ENCODE measurements at regions of chr16 and their contacts with region 1.

Region 1: DNA sequence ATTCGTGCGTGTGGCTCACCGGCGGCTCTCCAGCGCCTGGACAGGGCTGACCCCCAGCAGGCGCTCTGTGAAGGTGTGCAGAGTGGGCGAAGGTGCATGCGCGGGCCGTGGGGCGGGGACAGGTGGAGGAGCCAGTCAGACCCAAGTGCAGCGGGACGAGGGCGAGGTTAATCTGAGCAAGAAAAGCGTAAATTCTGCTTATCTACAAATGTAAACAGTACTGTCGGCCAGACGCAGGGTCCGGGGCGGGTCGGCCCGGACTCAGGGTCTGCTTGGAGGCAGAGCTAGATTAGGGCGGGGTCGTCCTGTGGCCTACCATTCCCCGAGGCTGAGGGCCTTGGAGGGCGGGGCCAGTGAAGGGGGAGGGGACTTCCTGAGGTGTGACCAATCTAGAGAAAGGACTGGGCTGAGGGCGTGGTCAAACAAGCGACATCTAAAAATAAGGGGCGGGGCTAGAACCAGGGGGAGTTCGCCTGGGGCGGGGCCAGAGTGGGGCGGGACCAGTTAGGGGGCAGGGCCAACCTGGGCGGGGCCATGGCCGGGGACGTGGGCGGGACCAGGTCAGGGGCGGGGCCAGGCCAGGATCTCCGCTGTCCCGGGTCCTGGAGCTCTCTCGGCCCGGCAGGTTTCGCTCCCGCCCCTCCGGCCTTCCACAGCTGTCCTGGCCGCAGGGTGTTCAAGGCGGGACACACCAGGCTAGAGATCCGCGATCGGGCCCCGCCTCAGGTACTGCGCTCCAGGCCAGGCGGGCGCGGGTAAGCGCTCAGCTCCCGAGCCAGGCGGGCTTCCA is at the start of gene SEC14L5:
- DNase-seq: peak; percentile 100
- ATAC-seq: peak; percentile 93
- H3K4me3 ChIP-seq: peak within 1 kb of the TSS; percentile 62 to 77 (median 62)
- H3K27ac ChIP-seq: peak within 1 kb of the TSS; percentile 77
- H3K4me1 ChIP-seq: peaks cover 23% of the 10 kb centered on the region
- H3K27me3 ChIP-seq: peaks cover 0 to 18% of the 10 kb centered on the region in 2 experiments; a peak in 3 of 5 replicates
- CTCF ChIP-seq: peak; percentile 61
- EP300 ChIP-seq: no peak; a peak in 1 of 4 replicates
- POLR2A ChIP-seq: peak; percentile 74 to 85
- RAD21 ChIP-seq: peak; percentile 41; the same call in 1 of the 2 replicates
- total RNA-seq, gene SEC14L5: 0.36 and 0.42 TPM in 2 replicates

Region 2: DNA sequence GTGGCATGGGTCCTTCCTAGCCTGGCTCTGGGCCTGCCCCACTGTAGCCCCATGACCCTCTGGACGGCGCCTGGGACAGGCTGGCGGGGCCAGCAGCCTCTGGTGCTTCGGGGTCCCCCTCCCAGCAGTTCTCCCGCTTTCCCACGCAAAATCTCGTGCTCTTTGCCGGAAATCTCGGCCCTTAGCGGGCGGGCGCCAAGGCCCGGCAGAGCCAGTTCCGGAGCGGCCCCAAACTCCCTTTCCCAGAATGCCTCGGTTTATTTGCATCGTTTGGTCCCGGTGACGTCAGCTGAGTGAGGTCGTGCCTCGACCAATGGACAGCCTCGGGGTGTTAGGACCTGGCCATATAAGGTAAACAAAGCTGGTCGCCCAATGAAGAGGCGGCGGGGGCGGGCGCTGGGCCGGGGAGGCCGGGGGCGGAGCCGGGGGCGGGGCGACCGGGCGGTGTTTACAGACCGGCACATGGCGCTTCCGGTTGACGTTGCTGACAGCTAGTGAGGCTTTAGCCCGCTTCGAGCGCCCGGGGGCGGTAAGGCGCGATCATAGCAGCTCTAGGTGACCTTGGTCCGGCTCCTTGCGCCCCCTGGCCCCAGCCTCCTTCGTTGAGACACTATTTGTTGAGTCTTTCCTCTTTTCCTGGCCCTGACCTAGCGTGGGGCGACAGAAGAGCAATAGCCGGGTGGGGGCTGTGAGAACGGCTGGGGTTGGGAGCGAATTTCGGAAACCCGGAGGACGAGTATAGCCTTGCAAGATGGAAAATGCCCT is 341.7 kb before region 1 on chr16:
- CTCF ChIA-PET with region 1: no interaction called
- POLR2A ChIA-PET with region 1: interaction called, 4 read pairs
- in situ Hi-C with region 1: no loop called
- intact Hi-C with region 1: loop called (anchors 10 kb)
- DNase-seq: peak; percentile 100
- ATAC-seq: peak; percentile 63
- H3K4me3 ChIP-seq: peak overlapping the region; percentile 58 to 88 (median 88)
- H3K27ac ChIP-seq: peak overlapping the region; percentile 98
- H3K4me1 ChIP-seq: peaks cover 82% of the 10 kb centered on the region
- H3K27me3 ChIP-seq: no peaks in the 10 kb centered on the region; a peak in 1 of 5 replicates
- CTCF ChIP-seq: peak; percentile 78
- EP300 ChIP-seq: 0 out of 4 replicates have a peak, but pooled peaks of 1 of the 2 experiments have one; percentile 8
- POLR2A ChIP-seq: peak; percentile 65 to 68
- RAD21 ChIP-seq: peak; percentile 46; the same call in 1 of the 2 replicates

Region 3: GRCh38 chr16:4766874-4767628 is 190.9 kb before region 1 on chr16 and contains the start of gene ZNF500:
- CTCF ChIA-PET with region 1: no interaction called
- POLR2A ChIA-PET with region 1: interaction called, 7 read pairs
- in situ Hi-C with region 1: no loop called
- intact Hi-C with region 1: loop called (anchors 2 kb)
- DNase-seq: peak; percentile 93
- ATAC-seq: peak; percentile 85
- H3K4me3 ChIP-seq: peak within 1 kb of the TSS; percentile 91 to 92 (median 91)
- H3K27ac ChIP-seq: peak within 1 kb of the TSS; percentile 78
- H3K4me1 ChIP-seq: peaks cover 46% of the 10 kb centered on the region
- H3K27me3 ChIP-seq: no peaks in the 10 kb centered on the region; a peak in 1 of 5 replicates
- CTCF ChIP-seq: no peak; the same call in 1 of the 2 replicates
- EP300 ChIP-seq: no peak
- POLR2A ChIP-seq: peak; percentile 35 to 69
- RAD21 ChIP-seq: 0 out of 2 replicates have a peak, but pooled peaks have one; percentile 15
- total RNA-seq, gene ZNF500: 8.1 and 12.2 TPM in 2 replicates

Region 4: DNA sequence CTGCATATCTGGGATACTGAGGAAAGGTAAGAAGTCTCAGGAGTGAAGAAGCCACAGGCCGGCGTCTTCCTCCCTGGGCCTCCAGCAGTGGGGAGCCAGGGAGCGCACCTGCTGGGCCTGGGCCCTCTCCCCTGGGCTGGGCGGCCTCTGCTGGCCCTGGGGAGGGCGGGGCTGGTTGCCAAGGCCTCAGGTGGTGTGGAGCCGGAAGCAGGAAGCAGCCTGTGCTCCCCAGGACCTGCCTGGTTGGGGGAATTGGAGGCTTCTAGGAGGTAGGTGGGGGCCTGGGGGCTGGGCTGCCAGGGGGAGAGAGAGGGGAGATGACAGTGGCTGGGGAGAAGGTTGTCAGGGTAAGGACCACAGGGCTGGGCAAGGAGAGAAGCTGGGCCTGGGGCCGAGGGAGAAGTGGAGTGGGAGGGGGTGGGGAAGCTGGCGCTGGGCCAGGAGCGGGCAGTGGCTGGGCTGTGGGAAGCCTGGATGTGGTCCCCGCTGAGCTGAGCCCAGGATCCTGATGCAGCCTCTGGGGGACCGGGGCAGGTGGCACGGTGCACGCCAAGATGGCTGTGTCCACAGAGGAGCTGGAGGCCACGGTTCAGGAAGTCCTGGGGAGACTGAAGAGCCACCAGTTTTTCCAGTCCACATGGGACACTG is 162.6 kb before region 1 on chr16 and contains the start of gene SMIM22:
- CTCF ChIA-PET with region 1: no interaction called
- POLR2A ChIA-PET with region 1: no interaction called
- in situ Hi-C with region 1: no loop called
- intact Hi-C with region 1: no loop called
- DNase-seq: no peak
- ATAC-seq: no peak
- H3K4me3 ChIP-seq: no peak within 1 kb of the TSS
- H3K27ac ChIP-seq: no peak within 1 kb of the TSS
- H3K4me1 ChIP-seq: peaks cover 25% of the 10 kb centered on the region
- H3K27me3 ChIP-seq: no peaks in the 10 kb centered on the region; a peak in 1 of 5 replicates
- CTCF ChIP-seq: no peak
- EP300 ChIP-seq: no peak
- POLR2A ChIP-seq: 0 out of 4 replicates have a peak, but pooled peaks of 1 of the 2 experiments have one; percentile 5
- RAD21 ChIP-seq: no peak
- total RNA-seq, gene SMIM22: not detected in 2 replicates

Region 5: DNA sequence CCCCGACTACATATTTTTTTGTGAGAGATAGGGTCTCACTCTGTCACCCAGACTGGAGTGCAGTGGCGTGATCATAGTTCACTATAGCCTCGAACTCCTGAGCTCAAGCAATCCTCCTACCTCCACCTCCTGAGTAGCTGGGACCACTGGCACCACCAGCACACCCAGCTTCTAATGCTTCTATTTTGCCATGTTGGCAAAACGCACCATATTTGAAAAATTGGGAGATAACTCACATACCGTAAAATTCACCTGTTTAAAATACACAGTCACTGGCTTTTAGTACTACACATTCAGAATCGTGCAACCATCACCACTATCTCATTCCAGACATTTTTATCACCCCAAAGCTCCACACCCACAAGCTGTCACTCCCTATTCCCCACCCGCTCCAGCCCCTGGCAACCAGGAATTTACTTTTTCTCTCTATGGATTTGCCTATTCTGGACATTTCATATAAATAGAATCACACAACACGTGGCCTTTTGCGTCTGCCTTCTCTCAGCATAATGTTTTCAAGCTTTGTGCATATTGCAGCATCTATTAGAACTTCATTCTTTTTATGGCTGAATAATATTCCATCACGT is 46.0 kb before region 1 on chr16:
- CTCF ChIA-PET with region 1: no interaction called
- POLR2A ChIA-PET with region 1: interaction called, 7 read pairs
- in situ Hi-C with region 1: no loop called
- intact Hi-C with region 1: loop called (anchors 2 kb)
- DNase-seq: peak; percentile 32
- ATAC-seq: no peak
- H3K4me3 ChIP-seq: no peak overlapping the region
- H3K27ac ChIP-seq: no peak overlapping the region
- H3K4me1 ChIP-seq: peaks cover 58% of the 10 kb centered on the region
- H3K27me3 ChIP-seq: no peaks in the 10 kb centered on the region
- CTCF ChIP-seq: no peak
- EP300 ChIP-seq: no peak
- POLR2A ChIP-seq: no peak
- RAD21 ChIP-seq: no peak

Region 6: GRCh38 chr16:5025171-5025632 is 67.3 kb after region 1 on chr16:
- CTCF ChIA-PET with region 1: interaction called, 10 read pairs
- POLR2A ChIA-PET with region 1: no interaction called
- in situ Hi-C with region 1: no loop called
- intact Hi-C with region 1: loop called (anchors 2 kb)
- DNase-seq: no peak
- ATAC-seq: peak; percentile 60
- H3K4me3 ChIP-seq: no peak overlapping the region
- H3K27ac ChIP-seq: no peak overlapping the region
- H3K4me1 ChIP-seq: no peaks in the 10 kb centered on the region
- H3K27me3 ChIP-seq: peaks cover 4 to 15% of the 10 kb centered on the region in 2 experiments; a peak in 4 of 5 replicates
- CTCF ChIP-seq: peak; percentile 71
- EP300 ChIP-seq: no peak
- POLR2A ChIP-seq: no peak
- RAD21 ChIP-seq: peak; percentile 30; the same call in 1 of the 2 replicates

Region 7: DNA sequence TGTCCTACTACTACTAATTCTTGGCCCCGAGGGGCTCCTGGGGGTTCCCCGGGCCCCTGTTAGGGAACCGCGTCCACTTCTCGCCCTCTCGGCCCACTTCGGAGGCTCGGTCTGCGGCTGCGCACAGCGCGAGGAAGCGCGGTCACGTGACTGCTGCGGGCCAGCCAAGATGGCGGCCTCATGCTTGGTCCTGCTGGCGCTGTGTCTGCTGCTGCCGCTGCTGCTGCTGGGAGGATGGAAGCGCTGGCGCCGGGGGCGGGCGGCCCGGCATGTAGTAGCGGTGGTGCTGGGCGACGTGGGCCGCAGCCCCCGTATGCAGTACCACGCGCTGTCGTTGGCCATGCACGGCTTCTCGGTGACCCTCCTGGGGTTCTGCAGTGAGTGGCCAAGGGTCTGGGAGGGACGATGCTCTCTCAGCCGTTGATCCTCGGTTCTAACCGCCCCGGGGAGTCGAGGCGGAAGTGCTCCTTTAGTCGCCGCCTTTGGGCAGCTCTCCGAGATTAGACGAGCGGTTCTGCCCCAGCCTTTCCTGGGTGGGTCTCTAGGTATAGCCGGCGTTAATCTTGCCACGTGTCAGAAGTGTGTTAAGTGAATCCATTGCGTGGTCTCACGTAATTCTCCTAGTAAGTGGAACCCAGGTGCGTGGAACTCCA is 113.9 kb after region 1 on chr16 and contains the start of gene ALG1:
- CTCF ChIA-PET with region 1: no interaction called
- POLR2A ChIA-PET with region 1: interaction called, 10 read pairs
- in situ Hi-C with region 1: no loop called
- intact Hi-C with region 1: loop called (anchors 5 kb)
- DNase-seq: peak; percentile 83
- ATAC-seq: peak; percentile 90
- H3K4me3 ChIP-seq: peak within 1 kb of the TSS; percentile 79 to 89 (median 82)
- H3K27ac ChIP-seq: peak within 1 kb of the TSS; percentile 70
- H3K4me1 ChIP-seq: peaks cover 23% of the 10 kb centered on the region
- H3K27me3 ChIP-seq: no peaks in the 10 kb centered on the region; a peak in 1 of 5 replicates
- CTCF ChIP-seq: peak; percentile 46
- EP300 ChIP-seq: peak in 1 of 2 experiments; percentile 16; a peak in 1 of 4 replicates
- POLR2A ChIP-seq: peak; percentile 97 to 100
- RAD21 ChIP-seq: peak; percentile 80
- total RNA-seq, gene ALG1: 39.6 and 75.6 TPM in 2 replicates